Astrocyte of the cerebellum (primary cell): ENCODE measurements at regions of chr7 and their contacts with region 1.

Region 1: DNA sequence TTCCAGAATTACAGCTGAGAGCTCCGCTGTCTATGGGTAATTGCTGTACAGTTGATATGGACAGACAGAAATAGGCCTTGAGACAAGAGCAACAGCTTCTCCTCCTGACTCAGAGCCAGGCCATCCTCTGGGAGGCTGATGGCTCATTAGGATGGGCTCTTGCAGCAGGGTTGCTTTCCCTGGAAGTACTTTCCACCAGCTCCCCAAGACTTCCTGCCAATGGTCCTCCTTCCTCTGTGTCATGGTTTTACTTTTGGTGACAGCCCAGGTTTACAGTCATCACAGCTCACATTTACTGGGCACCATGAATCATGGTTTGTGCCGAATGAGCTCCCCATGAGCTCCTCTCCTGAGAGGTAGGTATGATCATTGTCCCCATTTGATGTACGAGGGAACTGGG is 131.8 kb downstream of the HECW1 start:
- DNase-seq: no peak
- H3K4me3 ChIP-seq: no peak overlapping the region
- CTCF ChIP-seq: no peak

Region 2: GRCh38 chr7:43302211-43302711 is 58.0 kb after region 1 on chr7:
- in situ Hi-C with region 1: loop called (anchors 5 kb)
- DNase-seq: peak; percentile 65
- H3K4me3 ChIP-seq: no peak overlapping the region
- CTCF ChIP-seq: no peak

Region 3: DNA sequence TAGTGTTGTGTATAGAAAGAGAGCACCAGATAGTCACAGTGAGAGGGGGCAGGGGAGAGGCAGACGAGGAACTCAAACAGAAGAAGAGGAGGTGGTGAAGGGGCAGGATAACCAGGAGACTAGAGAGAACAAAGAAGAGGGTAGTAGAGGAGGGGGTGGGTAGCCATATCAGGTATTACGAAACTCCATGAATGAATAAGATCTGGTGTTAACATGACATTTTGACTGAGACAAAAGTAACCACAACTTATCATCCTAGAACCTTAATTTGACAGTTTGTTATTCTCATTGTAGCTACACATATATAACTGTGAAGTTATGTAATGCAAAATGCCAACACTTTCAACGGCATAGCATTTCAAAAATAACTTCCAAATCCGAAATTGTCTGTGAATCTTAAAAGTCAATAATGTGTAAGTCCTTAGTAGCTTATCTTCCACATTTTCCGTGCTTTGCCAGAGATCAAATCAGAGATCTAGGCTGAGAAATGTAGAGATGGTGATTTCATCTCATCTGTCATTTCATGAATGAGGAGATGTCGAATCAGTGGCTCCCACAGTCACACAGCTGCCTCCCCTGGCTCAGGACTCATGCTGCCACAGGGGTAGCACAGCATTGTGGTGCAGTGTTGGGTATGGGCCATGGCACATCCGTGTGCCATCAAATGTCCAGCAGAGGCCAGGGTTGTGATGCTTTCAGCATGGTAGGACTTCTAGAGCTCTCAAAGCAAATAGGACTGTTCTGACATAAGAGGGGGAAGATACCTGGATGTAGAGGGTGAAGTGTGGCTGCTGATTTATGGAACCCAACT is 70.4 kb after region 1 on chr7:
- in situ Hi-C with region 1: no loop called
- DNase-seq: no peak
- H3K4me3 ChIP-seq: no peak overlapping the region
- CTCF ChIP-seq: no peak

Region 4: DNA sequence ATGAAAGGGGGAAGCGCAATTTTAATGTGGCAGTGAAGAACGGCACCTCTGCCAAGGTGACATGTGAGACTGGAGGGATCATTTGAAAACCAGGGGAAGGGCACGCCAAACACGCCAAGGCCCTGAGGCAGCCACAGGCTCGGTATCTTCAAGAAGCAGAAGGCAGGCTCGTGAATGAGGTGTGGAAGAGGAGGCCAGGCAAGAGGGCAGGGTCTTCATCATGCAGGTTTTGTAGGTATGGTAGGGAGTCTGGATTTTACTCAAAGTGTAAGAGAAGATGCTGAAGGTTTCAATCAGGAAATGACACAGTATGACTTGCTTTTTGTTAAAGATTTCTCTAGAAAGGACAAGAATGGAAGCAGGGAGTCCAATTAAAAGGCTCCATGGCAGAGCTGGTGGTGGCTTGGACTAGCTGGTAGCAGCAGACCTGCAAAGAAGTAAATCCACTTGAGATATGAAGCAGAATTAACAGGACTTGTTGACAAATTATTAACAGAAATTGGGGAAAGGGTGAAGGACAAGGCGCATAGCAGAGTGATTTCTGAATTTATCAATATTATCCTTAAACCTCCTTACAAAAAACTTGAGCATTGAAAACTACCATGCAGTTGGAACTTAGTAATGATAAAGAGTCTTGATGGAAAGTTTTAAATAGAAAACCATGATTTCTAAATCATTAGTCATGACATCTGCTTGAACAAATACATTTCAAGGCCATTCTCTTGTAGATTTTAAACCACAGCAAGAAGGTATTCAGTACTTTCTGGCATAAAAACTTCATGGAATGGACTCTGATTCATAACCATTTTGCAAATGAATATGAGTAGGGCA is 414.7 kb after region 1 on chr7:
- in situ Hi-C with region 1: no loop called
- DNase-seq: peak; percentile 76
- H3K4me3 ChIP-seq: no peak overlapping the region
- CTCF ChIP-seq: no peak